ENCODE measurements at regions of chr3 and their contacts with region 1.

Region 1: DNA sequence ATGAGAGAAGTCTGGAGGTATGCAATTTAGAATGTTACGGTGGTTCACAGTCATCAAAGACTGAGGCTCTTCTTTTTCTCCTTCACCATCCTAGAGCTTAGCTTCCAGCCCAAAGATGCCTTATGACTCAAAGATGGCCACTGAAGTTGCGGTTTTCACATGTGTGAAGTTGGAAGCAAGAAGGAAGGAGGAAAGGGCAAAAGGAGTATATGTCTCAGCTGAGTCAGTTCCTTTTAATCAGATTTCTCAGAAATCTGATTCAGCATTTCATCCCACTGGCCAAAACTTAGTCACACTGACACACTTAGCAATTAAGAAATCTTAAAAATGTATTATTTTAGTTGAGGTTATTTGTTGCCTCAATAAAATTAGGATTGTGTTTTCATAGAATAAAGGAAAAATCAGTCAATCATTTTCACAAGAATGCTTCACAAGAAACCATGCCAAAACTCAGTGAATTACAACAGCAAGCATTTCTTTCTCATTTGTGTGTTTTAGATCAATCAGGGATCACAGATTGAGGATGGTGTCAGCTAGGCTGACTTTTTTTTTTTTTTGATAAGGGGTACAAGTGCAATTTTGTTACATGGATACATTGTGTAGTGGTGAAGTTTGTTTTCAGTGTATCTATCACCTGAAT is 211.1 kb upstream of the GADL1 start:
- DNase-seq: peak; percentile 17
- H3K4me3 Mint-ChIP-seq: no peak overlapping the region
- H3K27ac Mint-ChIP-seq: peak overlapping the region; percentile 49
- H3K4me1 Mint-ChIP-seq: peaks cover 55% of the 10 kb centered on the region
- H3K27me3 Mint-ChIP-seq: no peaks in the 10 kb centered on the region

Region 2: GRCh38 chr3:30658328-30659052 is 447.1 kb before region 1 on chr3:
- intact Hi-C with region 1: loop called (anchors 5 kb)
- DNase-seq: no peak
- H3K4me3 Mint-ChIP-seq: peak overlapping the region; percentile 85
- H3K27ac Mint-ChIP-seq: peak overlapping the region; percentile 96
- H3K4me1 Mint-ChIP-seq: peaks cover 97% of the 10 kb centered on the region
- H3K27me3 Mint-ChIP-seq: no peaks in the 10 kb centered on the region

Region 3: DNA sequence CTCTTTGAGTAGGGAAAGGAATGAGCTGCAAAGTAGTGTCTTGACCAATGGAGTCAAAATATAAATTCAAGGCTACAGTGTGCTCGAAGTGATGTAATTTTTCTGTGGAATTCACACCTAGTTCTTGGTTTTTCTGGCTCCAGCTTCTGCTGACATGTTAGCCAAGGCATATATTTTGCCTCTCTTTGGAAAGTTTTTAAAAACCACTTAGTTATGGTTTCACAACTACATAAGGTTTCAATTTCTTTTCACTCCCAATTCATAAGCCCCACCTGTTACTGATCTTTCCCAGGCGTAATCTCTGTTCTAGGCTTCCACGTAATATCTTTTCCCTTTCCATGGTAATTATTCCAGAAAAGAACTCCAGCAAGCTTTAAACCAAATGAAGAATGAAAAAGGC is 258.0 kb before region 1 on chr3:
- intact Hi-C with region 1: loop called (anchors 1 kb)
- DNase-seq: no peak
- H3K4me3 Mint-ChIP-seq: no peak overlapping the region
- H3K27ac Mint-ChIP-seq: no peak overlapping the region
- H3K4me1 Mint-ChIP-seq: peaks cover 30% of the 10 kb centered on the region
- H3K27me3 Mint-ChIP-seq: no peaks in the 10 kb centered on the region

Region 4: DNA sequence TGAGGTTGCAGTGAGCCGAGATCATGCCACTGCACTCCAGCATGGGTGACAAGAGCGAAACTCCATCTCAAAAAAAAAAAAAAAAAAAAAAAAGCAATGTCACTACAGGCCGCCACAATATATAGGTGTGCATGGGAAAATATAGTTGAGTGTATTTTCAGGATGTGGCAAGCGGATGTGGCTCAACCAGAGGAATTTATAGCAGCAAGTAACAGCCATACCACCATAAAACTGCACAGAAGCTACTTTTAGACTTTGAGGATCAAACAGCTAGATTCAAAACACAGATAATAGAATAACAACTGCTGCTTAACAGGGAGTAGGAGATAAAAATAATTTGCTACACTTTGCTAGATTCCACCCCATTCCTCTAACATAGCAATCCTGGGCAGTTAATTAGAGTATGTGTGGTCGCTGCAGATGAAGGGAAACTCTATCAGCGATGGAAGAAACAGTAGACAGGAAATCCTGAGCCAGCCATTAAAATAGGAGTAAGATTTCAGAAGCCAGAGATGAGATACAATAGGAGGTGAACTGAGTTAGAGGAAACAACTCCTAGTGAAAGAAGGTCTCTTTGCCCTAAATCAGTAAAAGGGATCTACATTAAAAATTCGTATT is 108.4 kb after region 1 on chr3:
- intact Hi-C with region 1: loop called (anchors 5 kb)
- DNase-seq: peak; percentile 53
- H3K4me3 Mint-ChIP-seq: peak overlapping the region; percentile 43
- H3K27ac Mint-ChIP-seq: peak overlapping the region; percentile 81
- H3K4me1 Mint-ChIP-seq: peaks cover 94% of the 10 kb centered on the region
- H3K27me3 Mint-ChIP-seq: no peaks in the 10 kb centered on the region

Region 5: DNA sequence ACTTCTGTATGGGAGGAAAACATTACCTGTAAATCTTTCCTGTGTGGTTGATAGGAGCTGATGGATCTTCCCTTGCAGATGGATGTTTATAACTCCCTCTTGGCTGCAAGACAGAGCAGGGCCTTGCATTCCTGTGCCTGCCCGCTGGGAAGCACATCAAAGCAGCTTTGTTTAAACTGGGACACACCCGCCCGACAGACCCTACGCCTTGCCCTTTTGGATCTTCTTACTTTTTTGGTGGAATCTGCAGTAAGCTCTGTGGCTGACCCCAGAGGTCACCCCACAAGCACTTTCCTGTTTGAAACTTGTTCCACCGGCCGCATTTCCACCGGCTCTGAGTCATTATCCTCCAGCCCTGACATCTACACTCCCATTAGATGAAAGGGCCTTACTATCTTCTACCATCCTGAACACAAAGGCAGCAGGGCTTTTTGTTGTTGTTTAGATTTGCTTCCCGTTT is 183.1 kb after region 1 on chr3:
- intact Hi-C with region 1: loop called (anchors 1 kb)
- DNase-seq: peak; percentile 44
- H3K4me3 Mint-ChIP-seq: peak overlapping the region; percentile 46
- H3K27ac Mint-ChIP-seq: peak overlapping the region; percentile 87
- H3K4me1 Mint-ChIP-seq: peaks cover 49% of the 10 kb centered on the region
- H3K27me3 Mint-ChIP-seq: no peaks in the 10 kb centered on the region

Region 6: GRCh38 chr3:31472479-31473390 is 367.2 kb after region 1 on chr3:
- intact Hi-C with region 1: loop called (anchors 1 kb)
- DNase-seq: peak; percentile 17
- H3K4me3 Mint-ChIP-seq: no peak overlapping the region
- H3K27ac Mint-ChIP-seq: peak overlapping the region; percentile 59
- H3K4me1 Mint-ChIP-seq: peaks cover 19% of the 10 kb centered on the region
- H3K27me3 Mint-ChIP-seq: peaks cover 9% of the 10 kb centered on the region

Region 7: DNA sequence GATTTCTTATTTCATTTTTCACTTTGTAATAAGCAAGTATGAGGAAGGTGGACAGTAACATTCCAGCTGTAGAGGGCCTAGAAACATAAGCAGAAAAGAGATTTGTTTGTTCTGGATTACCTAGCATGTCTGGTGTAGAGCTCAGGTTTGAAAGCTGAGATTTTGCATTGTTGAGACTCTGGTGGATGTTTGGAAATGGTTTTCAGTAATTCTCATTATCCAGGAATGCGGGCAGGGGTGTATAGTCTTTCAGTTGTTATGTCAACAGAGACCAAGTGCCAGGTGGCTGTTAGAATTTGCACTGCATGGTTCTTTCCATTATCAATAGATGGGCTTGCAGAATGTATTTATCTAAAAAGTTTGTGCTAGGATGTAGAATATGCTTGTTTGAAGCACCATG is 1011.8 kb after region 1 on chr3:
- intact Hi-C with region 1: loop called (anchors 10 kb)
- DNase-seq: no peak
- H3K4me3 Mint-ChIP-seq: no peak overlapping the region
- H3K27ac Mint-ChIP-seq: no peak overlapping the region
- H3K4me1 Mint-ChIP-seq: peaks cover 34% of the 10 kb centered on the region
- H3K27me3 Mint-ChIP-seq: no peaks in the 10 kb centered on the region

Measured in activated T-helper 1 cell treated with anti-CD3 and anti-CD28 coated beads, Interleukin-12 subunit alpha, Interleukin-12 subunit beta, Interleukin-2, Interleukin-4 antibody, amounts not matched to agents 30 ng/mL and 10 ng/mL and 1 ng/mL, durations not matched to agents 14 hours and 24 hours and 36 hours (primary cell).